A549 (cell line): ENCODE measurements at regions of chr15 and their contacts with region 1.

Region 1: GRCh38 chr15:85289677-85290365 is 90.6 kb upstream of the AKAP13 start:
- DNase-seq: peak; percentile 71 to 96
- ATAC-seq: peak; percentile 85 to 89
- H3K4me3 ChIP-seq: no peak overlapping the region
- H3K27ac ChIP-seq: no peak overlapping the region
- H3K4me1 ChIP-seq: peaks cover 6% of the 10 kb centered on the region; the same call in 1 of the 3 replicates
- CTCF ChIP-seq: peak; percentile 87
- EP300 ChIP-seq: no peak
- POLR2A ChIP-seq: no peak
- RAD21 ChIP-seq: peak; percentile 83 to 88

Region 2: DNA sequence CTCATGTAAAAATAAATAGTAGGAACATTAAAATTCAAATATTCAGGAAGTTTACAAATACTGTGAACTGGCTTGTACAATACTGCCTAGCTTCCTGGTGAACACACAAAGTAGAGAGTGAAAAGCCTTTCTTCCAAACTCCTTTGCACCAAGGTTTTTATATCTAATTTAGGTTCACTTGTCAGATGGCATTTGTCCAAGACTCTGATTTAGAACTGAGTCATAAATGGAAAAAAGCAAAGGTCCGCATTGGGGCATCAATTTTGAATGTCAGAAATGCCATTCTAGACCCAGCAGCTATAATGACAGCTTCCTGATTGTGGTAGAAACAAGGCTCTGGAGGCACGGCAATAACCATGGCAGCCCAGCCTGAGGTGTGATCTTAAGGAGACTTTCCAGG is 147.5 kb before region 1 on chr15:
- CTCF ChIA-PET with region 1: no interaction called
- POLR2A ChIA-PET with region 1: no interaction called
- DNase-seq: peak in 1 of 2 experiments; percentile 35
- ATAC-seq: peak; percentile 27 to 38; a peak in 4 of 6 replicates
- H3K4me3 ChIP-seq: no peak overlapping the region
- H3K27ac ChIP-seq: 0 out of 6 replicates have a peak overlapping the region, but pooled peaks of 1 of the 2 experiments have one; percentile 9
- H3K4me1 ChIP-seq: peaks cover 17% of the 10 kb centered on the region
- CTCF ChIP-seq: no peak
- EP300 ChIP-seq: no peak
- POLR2A ChIP-seq: no peak
- RAD21 ChIP-seq: no peak

Region 3: DNA sequence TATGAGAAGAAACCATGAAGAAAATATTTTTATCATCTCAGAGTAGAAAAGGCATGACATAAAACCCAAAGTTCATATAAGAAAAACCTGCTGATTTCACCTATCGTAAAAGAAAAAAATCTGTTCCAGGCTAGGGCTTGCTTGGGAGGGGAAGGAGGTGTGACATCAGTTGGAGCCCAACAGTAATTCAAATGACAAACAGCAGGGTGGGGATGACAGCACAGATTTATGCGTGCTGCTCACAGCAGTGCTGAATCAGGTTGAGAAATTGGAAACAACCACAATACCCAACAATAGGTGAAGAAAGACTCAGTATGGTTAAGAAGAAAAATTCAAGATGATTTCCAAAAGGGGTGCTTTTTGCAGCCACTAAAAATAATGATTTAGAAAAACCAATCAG is 135.8 kb before region 1 on chr15:
- CTCF ChIA-PET with region 1: no interaction called
- POLR2A ChIA-PET with region 1: no interaction called
- DNase-seq: no peak
- ATAC-seq: no peak
- H3K4me3 ChIP-seq: no peak overlapping the region
- H3K27ac ChIP-seq: no peak overlapping the region
- H3K4me1 ChIP-seq: no peaks in the 10 kb centered on the region
- CTCF ChIP-seq: no peak
- EP300 ChIP-seq: no peak
- POLR2A ChIP-seq: no peak
- RAD21 ChIP-seq: no peak

Region 4: DNA sequence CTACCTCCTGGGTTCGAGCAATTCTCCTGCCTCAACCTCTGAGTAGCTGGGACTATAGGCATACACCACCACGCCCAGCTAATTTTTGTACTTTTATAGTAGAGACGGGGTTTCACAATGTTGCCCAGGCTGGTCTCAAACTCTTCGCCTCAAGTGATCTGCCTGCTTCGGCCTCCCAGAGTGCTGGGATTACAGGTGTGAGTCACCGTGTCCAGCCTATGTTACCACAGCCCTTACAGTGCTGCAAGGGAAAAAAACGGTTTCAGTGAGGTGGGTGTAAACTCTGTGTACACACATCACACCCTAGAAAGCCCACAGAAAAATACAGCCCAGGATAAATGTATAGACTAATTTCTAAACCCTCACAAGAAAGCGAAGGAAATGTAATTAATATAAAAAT is 12.9 kb before region 1 on chr15:
- CTCF ChIA-PET with region 1: interaction called, 28 read pairs
- POLR2A ChIA-PET with region 1: no interaction called
- DNase-seq: no peak
- ATAC-seq: no peak
- H3K4me3 ChIP-seq: no peak overlapping the region
- H3K27ac ChIP-seq: no peak overlapping the region
- H3K4me1 ChIP-seq: no peaks in the 10 kb centered on the region
- CTCF ChIP-seq: no peak
- EP300 ChIP-seq: no peak
- POLR2A ChIP-seq: no peak
- RAD21 ChIP-seq: no peak